ENCODE measurements at regions of chr7 and their contacts with region 1.

Region 1: GRCh38 chr7:116671681-116672595 is at the start of gene MET:
- DNase-seq: peak; percentile 83 to 91
- ATAC-seq: peak; percentile 87 to 95 (median 90)
- H3K4me3 ChIP-seq: peak within 1 kb of the TSS; percentile 81
- H3K27ac ChIP-seq: peak within 1 kb of the TSS; percentile 93
- H3K4me1 ChIP-seq: peaks cover 33% of the 10 kb centered on the region
- H3K27me3 ChIP-seq: no peaks in the 10 kb centered on the region
- CTCF ChIP-seq: peak; percentile 57
- total RNA-seq, gene MET: 17.8 to 84.1 (median 29.3) TPM

Region 2: GRCh38 chr7:116548506-116548905 is 123.4 kb before region 1 on chr7:
- intact Hi-C with region 1: no loop called
- DNase-seq: no peak
- ATAC-seq: no peak
- H3K4me3 ChIP-seq: no peak overlapping the region
- H3K27ac ChIP-seq: no peak overlapping the region
- H3K4me1 ChIP-seq: no peaks in the 10 kb centered on the region
- H3K27me3 ChIP-seq: no peaks in the 10 kb centered on the region
- CTCF ChIP-seq: no peak

Region 3: GRCh38 chr7:116630932-116631745 is 40.8 kb before region 1 on chr7:
- intact Hi-C with region 1: loop called (anchors 2 to 5 kb)
- DNase-seq: peak; percentile 84 to 96
- ATAC-seq: peak; percentile 85 to 96 (median 92)
- H3K4me3 ChIP-seq: peak overlapping the region; percentile 27
- H3K27ac ChIP-seq: peak overlapping the region; percentile 80
- H3K4me1 ChIP-seq: peaks cover 50% of the 10 kb centered on the region
- H3K27me3 ChIP-seq: no peaks in the 10 kb centered on the region
- CTCF ChIP-seq: no peak

Region 4: DNA sequence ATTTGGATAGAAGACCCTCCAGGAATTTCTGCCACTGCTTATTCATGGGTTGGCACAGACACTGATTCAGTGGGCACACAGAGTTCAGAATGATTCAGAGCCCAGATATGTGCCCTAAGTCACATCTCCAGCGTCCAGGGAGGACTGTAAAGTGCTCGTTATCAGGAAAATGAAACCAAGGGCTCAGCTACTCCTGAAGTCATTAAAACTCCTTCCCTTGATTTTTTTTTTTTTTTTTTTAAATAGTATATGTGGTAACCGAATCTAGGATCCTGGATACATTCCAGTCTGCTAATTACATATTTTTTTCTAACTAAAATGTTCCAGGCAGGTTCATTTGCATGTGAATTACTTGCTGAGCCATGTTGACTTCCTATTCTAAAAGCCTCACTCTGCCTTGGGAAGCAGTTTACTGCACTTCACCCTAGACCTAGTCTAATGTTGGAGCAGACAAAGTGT is 34.8 kb after region 1 on chr7:
- intact Hi-C with region 1: loop called in 1 of 2 experiments (anchors 5 kb)
- DNase-seq: no peak
- ATAC-seq: peak; percentile 81 to 95 (median 93)
- H3K4me3 ChIP-seq: peak overlapping the region; percentile 50
- H3K27ac ChIP-seq: peak overlapping the region; percentile 60
- H3K4me1 ChIP-seq: peaks cover 49% of the 10 kb centered on the region
- H3K27me3 ChIP-seq: no peaks in the 10 kb centered on the region
- CTCF ChIP-seq: no peak

Region 5: DNA sequence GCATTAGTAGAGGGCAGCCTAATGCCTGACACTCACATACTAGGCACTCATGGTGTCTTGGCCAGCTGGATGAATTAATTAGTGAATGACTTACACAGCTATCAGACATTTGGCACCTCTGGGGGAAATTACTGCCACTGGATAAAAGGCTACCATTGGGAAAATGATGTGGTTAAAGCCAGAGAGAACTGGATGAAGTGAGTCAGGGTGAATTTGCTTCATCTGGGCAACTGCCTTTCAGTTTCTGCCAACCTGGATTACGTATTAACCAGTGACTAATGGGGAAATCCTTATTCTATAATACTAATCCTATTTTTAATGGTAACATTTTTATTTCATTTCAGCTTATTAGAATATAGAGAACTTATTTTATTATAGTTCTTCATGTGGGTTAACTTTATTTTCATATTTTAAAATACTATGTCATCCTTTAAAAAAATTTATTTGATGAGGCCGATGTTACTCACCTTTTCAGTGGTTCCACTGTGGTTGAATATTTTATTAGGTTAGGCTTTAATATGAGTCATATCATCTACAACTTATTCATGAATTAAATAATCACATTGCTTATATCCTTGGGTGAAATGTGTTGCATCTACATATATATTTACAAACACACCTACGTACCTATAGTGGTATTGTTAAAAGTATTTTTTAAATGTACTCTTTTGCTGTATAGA is 104.8 kb after region 1 on chr7:
- intact Hi-C with region 1: loop called in 1 of 2 experiments (anchors 5 kb)
- DNase-seq: no peak
- ATAC-seq: peak; percentile 77 to 93 (median 84)
- H3K4me3 ChIP-seq: no peak overlapping the region
- H3K27ac ChIP-seq: peak overlapping the region; percentile 66
- H3K4me1 ChIP-seq: peaks cover 51% of the 10 kb centered on the region
- H3K27me3 ChIP-seq: no peaks in the 10 kb centered on the region
- CTCF ChIP-seq: no peak

Measured in psoas muscle (tissue), 8 donors.